ENCODE measurements at regions of chr16 and their contacts with region 1.

Region 1: GRCh38 chr16:85821441-85822135 is 22.1 kb downstream of the COX4I1 start:
- DNase-seq: peak; percentile 89
- H3K4me3 ChIP-seq: no peak overlapping the region
- H3K27ac ChIP-seq: no peak overlapping the region
- H3K4me1 ChIP-seq: peaks cover 0 to 10% (median 0%) of the 10 kb centered on the region in 4 donors
- H3K27me3 ChIP-seq: peaks cover 0 to 8% (median 4%) of the 10 kb centered on the region in 3 donors
- CTCF ChIP-seq: peak; percentile 94 to 99 (median 98)
- EP300 ChIP-seq: no peak
- POLR2A ChIP-seq: no peak

Region 2: GRCh38 chr16:85988723-85989313 is 167.2 kb after region 1 on chr16:
- intact Hi-C with region 1: loop called (anchors 1 kb)
- DNase-seq: peak; percentile 25
- H3K4me3 ChIP-seq: no peak overlapping the region
- H3K27ac ChIP-seq: no peak overlapping the region
- H3K4me1 ChIP-seq: peaks cover 0 to 6% (median 2%) of the 10 kb centered on the region in 4 donors
- H3K27me3 ChIP-seq: peaks cover 0 to 42% (median 7%) of the 10 kb centered on the region in 3 donors
- CTCF ChIP-seq: no peak
- EP300 ChIP-seq: no peak
- POLR2A ChIP-seq: no peak

Region 3: DNA sequence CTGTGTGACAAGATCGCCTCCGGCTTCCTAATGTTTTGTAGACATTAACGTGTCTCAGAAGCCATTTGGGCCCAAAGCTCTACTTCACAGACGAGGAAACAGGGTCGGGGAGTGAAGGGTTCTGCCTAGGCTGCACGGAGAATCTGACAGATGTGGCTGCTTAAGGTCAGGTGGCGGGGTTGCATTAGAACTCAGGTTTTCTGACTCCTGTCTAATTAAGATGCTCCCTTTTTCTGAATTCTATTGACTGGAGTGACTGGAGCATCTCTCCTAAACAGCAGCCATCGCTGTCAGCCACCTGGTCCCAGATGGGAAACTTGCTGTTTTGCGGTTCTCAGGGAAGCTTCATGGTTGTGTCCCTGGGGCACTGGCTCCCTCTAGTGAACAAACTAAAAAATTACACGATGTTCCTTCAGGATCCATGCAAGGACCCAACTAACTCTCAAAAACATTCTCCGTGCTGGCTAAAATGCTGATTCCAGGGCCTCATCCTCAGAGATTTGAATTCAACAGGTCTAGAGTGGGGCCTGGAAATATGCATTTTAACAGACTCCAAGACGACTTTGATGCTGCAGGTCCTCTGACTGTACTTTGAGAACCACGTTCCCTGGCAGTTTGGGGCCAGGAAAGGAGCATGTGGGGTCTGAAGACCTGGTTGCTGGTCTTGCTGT is 194.7 kb after region 1 on chr16:
- intact Hi-C with region 1: loop called (anchors 1 kb)
- DNase-seq: peak; percentile 72
- H3K4me3 ChIP-seq: no peak overlapping the region
- H3K27ac ChIP-seq: no peak overlapping the region
- H3K4me1 ChIP-seq: peaks cover 0 to 17% (median 15%) of the 10 kb centered on the region in 4 donors
- H3K27me3 ChIP-seq: no peaks in the 10 kb centered on the region
- CTCF ChIP-seq: peak; percentile 59 to 76 (median 62)
- EP300 ChIP-seq: no peak
- POLR2A ChIP-seq: no peak

Measured in sigmoid colon (tissue), 7 donors.